ENCODE measurements at regions of chr16 and their contacts with region 1.

Region 1: DNA sequence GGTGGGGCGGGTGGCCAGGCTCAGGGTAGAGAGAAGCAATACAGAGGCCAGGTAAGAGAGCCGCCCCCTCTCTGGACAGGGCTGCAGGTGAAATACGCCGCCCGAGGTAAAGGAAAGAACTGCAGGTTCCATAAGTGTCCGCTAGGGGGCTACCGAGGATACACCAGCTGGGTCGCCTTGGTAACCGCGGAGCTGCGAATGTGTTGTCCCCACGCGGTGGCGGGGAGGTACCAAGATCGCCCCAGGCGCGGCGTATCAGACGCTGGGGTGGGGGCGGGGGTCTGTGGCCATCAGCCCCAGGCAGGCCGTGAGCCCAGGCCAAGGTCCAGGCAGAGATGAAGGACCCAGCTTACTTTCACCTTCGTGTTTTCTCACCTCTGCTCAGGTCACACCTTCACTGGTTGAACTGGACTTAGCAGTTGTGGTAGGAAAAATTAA is 18.4 kb upstream of the ZFP90 start:
- DNase-seq: peak; percentile 74 to 93 (median 89)
- ATAC-seq: peak; percentile 99
- H3K4me3 ChIP-seq: peak overlapping the region; percentile 28 to 33
- H3K4me3 Mint-ChIP-seq: peak overlapping the region; percentile 62
- H3K27ac ChIP-seq: no peak overlapping the region
- H3K27ac Mint-ChIP-seq: peak overlapping the region; percentile 74
- H3K4me1 ChIP-seq: peaks cover 5% of the 10 kb centered on the region
- H3K4me1 Mint-ChIP-seq: peaks cover 11% of the 10 kb centered on the region
- H3K27me3 ChIP-seq: no peaks in the 10 kb centered on the region
- H3K27me3 Mint-ChIP-seq: peaks cover 2% of the 10 kb centered on the region
- CTCF ChIP-seq: peak; percentile 99

Region 2: GRCh38 chr16:68005786-68006286 is 514.8 kb before region 1 on chr16:
- CTCF ChIA-PET with region 1: no interaction called
- POLR2A ChIA-PET with region 1: no interaction called
- intact Hi-C with region 1: no loop called
- DNase-seq: peak; percentile 39 to 85 (median 67)
- ATAC-seq: peak; percentile 96
- H3K4me3 ChIP-seq: no peak overlapping the region
- H3K4me3 Mint-ChIP-seq: peak overlapping the region; percentile 51
- H3K27ac ChIP-seq: peak overlapping the region; percentile 75 to 85
- H3K27ac Mint-ChIP-seq: peak overlapping the region; percentile 99
- H3K4me1 ChIP-seq: peaks cover 33% of the 10 kb centered on the region
- H3K4me1 Mint-ChIP-seq: peaks cover 39% of the 10 kb centered on the region
- H3K27me3 ChIP-seq: no peaks in the 10 kb centered on the region
- H3K27me3 Mint-ChIP-seq: no peaks in the 10 kb centered on the region
- CTCF ChIP-seq: no peak

Region 3: DNA sequence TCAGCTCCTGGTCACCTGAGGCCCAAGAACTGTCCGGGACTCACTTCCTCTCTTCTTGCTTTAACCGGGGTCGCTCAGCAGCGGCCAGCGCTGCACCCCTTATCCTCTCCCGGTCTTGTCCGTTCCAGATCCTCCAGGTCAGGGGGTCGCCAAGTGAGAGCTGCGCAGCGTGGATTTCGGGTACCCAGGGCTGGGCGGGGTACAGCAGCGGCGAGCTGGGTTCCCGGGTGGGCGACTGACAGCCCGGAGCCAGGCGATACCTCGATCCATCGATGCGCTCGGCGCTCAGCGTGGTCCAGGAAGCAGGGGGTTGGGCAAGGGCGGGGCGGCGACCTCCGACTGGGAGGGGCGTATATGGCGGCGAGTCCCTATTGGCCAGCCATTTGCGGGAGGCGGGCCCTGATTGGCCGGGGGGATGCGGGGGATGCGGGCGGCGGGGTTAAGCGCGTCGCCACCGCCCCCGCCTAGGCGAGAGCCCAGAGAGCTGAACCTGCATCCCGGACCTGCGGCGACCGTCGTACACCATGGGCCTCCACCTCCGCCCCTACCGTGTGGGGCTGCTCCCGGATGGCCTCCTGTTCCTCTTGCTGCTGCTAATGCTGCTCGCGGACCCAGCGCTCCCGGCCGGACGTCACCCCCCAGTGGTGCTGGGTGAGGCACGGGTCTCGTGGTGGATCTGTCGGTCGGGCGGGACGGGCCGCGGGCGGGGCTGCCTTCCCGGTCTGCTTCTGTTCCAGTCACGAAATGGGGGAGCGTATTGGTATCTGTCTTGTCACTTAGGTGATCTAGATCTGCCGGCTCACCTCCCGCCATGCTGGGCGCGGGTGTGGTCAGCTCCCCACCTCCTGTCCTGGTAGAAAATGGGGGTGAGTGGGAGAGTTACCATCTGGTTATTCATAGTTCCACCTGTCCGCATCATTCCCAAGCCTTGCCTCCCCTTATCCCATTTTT is 275.5 kb before region 1 on chr16 and contains the start of gene PLA2G15:
- CTCF ChIA-PET with region 1: no interaction called
- POLR2A ChIA-PET with region 1: no interaction called
- intact Hi-C with region 1: loop called (anchors 10 kb)
- DNase-seq: peak; percentile 94 to 98 (median 96)
- ATAC-seq: peak; percentile 99
- H3K4me3 ChIP-seq: peak within 1 kb of the TSS; percentile 88 to 91
- H3K4me3 Mint-ChIP-seq: peak within 1 kb of the TSS; percentile 98
- H3K27ac ChIP-seq: peak within 1 kb of the TSS in 1 of 2 experiments; percentile 38
- H3K27ac Mint-ChIP-seq: peak within 1 kb of the TSS; percentile 79
- H3K4me1 ChIP-seq: peaks cover 21% of the 10 kb centered on the region
- H3K4me1 Mint-ChIP-seq: peaks cover 26% of the 10 kb centered on the region
- H3K27me3 ChIP-seq: no peaks in the 10 kb centered on the region
- H3K27me3 Mint-ChIP-seq: no peaks in the 10 kb centered on the region
- CTCF ChIP-seq: no peak
- total RNA-seq, gene PLA2G15: 5.1 to 6.0 TPM

Region 4: GRCh38 chr16:68448360-68448970 is 72.2 kb before region 1 on chr16 and contains the start of gene SMPD3:
- CTCF ChIA-PET with region 1: interaction called, 4 read pairs
- POLR2A ChIA-PET with region 1: no interaction called
- intact Hi-C with region 1: loop called in 1 of 2 experiments (anchors 2 kb)
- DNase-seq: peak; percentile 96 to 99 (median 98)
- ATAC-seq: peak; percentile 98
- H3K4me3 ChIP-seq: peak within 1 kb of the TSS; percentile 46 to 49
- H3K4me3 Mint-ChIP-seq: peak within 1 kb of the TSS; percentile 68
- H3K27ac ChIP-seq: peak within 1 kb of the TSS in 1 of 2 experiments; percentile 37
- H3K27ac Mint-ChIP-seq: no peak within 1 kb of the TSS
- H3K4me1 ChIP-seq: peaks cover 26% of the 10 kb centered on the region
- H3K4me1 Mint-ChIP-seq: peaks cover 21% of the 10 kb centered on the region
- H3K27me3 ChIP-seq: peaks cover 18 to 25% of the 10 kb centered on the region in 2 experiments
- H3K27me3 Mint-ChIP-seq: peaks cover 24% of the 10 kb centered on the region
- CTCF ChIP-seq: no peak
- total RNA-seq, gene SMPD3: 0.24 to 0.25 TPM

Region 5: DNA sequence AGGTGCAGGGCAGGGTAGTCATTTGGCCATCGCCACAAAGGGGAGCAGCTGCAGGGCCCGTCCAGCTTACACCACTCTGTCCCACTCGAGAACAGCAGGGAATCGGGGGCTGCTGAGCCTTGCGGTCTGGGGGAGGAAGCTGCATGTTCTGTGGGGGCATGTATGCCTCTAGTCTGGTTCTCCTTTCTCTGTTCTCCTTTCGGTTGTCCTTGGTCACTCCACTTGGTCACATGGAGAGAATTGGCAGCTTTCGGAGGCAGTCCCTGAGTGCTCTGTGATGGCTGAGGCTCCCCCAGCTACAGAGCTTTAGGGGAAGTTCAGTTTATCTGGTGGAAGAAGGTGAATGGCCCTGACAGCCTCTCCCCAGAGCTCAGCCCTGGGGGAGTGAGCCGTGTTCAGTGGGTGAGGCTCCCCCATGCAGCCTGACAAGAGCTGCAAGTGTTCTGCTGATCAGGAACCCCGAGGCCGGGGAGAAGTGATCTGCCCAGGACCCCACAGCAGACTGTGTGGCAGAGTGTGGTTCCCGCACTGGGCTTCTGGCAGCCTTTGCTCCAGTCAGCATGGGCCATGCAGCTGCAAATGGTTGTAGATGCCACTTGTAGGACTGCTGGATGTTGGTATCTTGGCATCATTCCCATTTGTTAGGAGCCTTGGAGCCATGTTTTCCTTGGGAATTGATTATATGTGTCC is 50.1 kb before region 1 on chr16:
- CTCF ChIA-PET with region 1: interaction called, 11 read pairs
- POLR2A ChIA-PET with region 1: no interaction called
- intact Hi-C with region 1: no loop called
- DNase-seq: peak in 5 of 9 experiments; percentile 5 to 60 (median 22)
- ATAC-seq: peak; percentile 59
- H3K4me3 ChIP-seq: peak overlapping the region; percentile 50 to 59
- H3K4me3 Mint-ChIP-seq: peak overlapping the region; percentile 86
- H3K27ac ChIP-seq: peak overlapping the region; percentile 10 to 70
- H3K27ac Mint-ChIP-seq: peak overlapping the region; percentile 90
- H3K4me1 ChIP-seq: peaks cover 36% of the 10 kb centered on the region
- H3K4me1 Mint-ChIP-seq: peaks cover 46% of the 10 kb centered on the region
- H3K27me3 ChIP-seq: no peaks in the 10 kb centered on the region
- H3K27me3 Mint-ChIP-seq: no peaks in the 10 kb centered on the region
- CTCF ChIP-seq: no peak

Region 6: GRCh38 chr16:68506331-68507053 is 14.2 kb before region 1 on chr16:
- CTCF ChIA-PET with region 1: interaction called, 28 read pairs
- POLR2A ChIA-PET with region 1: interaction called, 4 read pairs
- intact Hi-C with region 1: no loop called
- DNase-seq: no peak
- ATAC-seq: no peak
- H3K4me3 ChIP-seq: no peak overlapping the region
- H3K4me3 Mint-ChIP-seq: no peak overlapping the region
- H3K27ac ChIP-seq: no peak overlapping the region
- H3K27ac Mint-ChIP-seq: no peak overlapping the region
- H3K4me1 ChIP-seq: peaks cover 6% of the 10 kb centered on the region
- H3K4me1 Mint-ChIP-seq: peaks cover 2% of the 10 kb centered on the region
- H3K27me3 ChIP-seq: no peaks in the 10 kb centered on the region
- H3K27me3 Mint-ChIP-seq: no peaks in the 10 kb centered on the region
- CTCF ChIP-seq: no peak

Region 7: GRCh38 chr16:68590201-68590994 is 69.7 kb after region 1 on chr16:
- CTCF ChIA-PET with region 1: interaction called, 112 read pairs
- POLR2A ChIA-PET with region 1: no interaction called
- intact Hi-C with region 1: loop called in 1 of 2 experiments (anchors 5 kb)
- DNase-seq: peak; percentile 6 to 66 (median 62)
- ATAC-seq: peak; percentile 83
- H3K4me3 ChIP-seq: no peak overlapping the region
- H3K4me3 Mint-ChIP-seq: no peak overlapping the region
- H3K27ac ChIP-seq: no peak overlapping the region
- H3K27ac Mint-ChIP-seq: no peak overlapping the region
- H3K4me1 ChIP-seq: no peaks in the 10 kb centered on the region
- H3K4me1 Mint-ChIP-seq: peaks cover 2% of the 10 kb centered on the region
- H3K27me3 ChIP-seq: no peaks in the 10 kb centered on the region
- H3K27me3 Mint-ChIP-seq: no peaks in the 10 kb centered on the region
- CTCF ChIP-seq: peak; percentile 52

Region 8: DNA sequence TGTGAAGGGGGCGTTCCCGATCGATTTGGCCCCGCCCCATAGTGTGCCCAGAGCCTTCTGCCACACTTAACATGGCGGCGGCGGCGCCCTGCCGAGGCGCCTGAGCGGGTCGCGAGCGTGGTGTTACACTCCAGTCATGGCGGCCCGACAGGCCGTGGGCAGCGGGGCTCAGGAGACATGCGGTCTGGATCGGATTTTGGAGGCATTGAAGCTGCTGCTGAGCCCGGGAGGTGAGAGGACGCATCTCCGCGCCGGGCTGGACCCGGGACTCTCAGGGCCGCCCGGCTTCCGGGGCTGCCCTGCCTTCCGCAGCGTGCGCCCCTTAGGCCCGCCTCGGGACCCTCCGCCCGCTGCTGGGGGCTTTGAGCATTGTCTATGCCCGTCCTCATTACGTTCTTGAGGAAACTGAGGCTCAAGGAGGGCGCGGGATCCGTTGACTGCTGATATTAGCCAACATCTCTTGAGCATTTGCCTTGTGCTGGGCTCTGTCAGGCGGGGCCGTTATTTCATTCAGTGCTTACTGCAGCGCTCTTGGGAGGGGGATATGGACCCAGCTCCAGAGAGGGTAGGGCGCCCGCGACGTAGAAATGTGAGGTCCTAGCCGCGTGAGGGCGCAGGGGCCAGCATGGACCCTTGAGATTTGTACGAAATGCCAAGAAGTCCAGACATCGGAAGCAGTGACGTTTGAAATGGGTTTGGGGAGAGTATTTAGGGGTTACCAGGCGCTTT is 323.0 kb after region 1 on chr16 and contains the start of gene TANGO6:
- CTCF ChIA-PET with region 1: interaction called, 7 read pairs
- POLR2A ChIA-PET with region 1: no interaction called
- intact Hi-C with region 1: loop called in 1 of 2 experiments (anchors 2 kb)
- DNase-seq: peak; percentile 81 to 93 (median 90)
- ATAC-seq: peak; percentile 95
- H3K4me3 ChIP-seq: peak within 1 kb of the TSS; percentile 86 to 94
- H3K4me3 Mint-ChIP-seq: peak within 1 kb of the TSS; percentile 92
- H3K27ac ChIP-seq: peak within 1 kb of the TSS; percentile 78 to 86
- H3K27ac Mint-ChIP-seq: peak within 1 kb of the TSS; percentile 89
- H3K4me1 ChIP-seq: peaks cover 24% of the 10 kb centered on the region
- H3K4me1 Mint-ChIP-seq: peaks cover 29% of the 10 kb centered on the region
- H3K27me3 ChIP-seq: no peaks in the 10 kb centered on the region
- H3K27me3 Mint-ChIP-seq: no peaks in the 10 kb centered on the region
- CTCF ChIP-seq: no peak
- total RNA-seq, gene TANGO6: 12.1 to 16.3 TPM